ENCODE measurements at regions of chr1 and their contacts with region 1.

Region 1: GRCh38 chr1:224700915-224701531 is 84.9 kb downstream of the CNIH3 start:
- DNase-seq: no peak
- H3K4me3 ChIP-seq: no peak overlapping the region
- CTCF ChIP-seq: peak; percentile 42

Region 2: GRCh38 chr1:224711876-224712275 is 10.9 kb after region 1 on chr1:
- CTCF ChIA-PET with region 1: interaction called, 17 read pairs
- POLR2A ChIA-PET with region 1: no interaction called
- DNase-seq: no peak
- H3K4me3 ChIP-seq: no peak overlapping the region
- CTCF ChIP-seq: no peak

Measured in AG04449 (cell line).